Transverse colon (tissue), 4 donors: ENCODE measurements at regions of chr5 and their contacts with region 1.

Region 1: DNA sequence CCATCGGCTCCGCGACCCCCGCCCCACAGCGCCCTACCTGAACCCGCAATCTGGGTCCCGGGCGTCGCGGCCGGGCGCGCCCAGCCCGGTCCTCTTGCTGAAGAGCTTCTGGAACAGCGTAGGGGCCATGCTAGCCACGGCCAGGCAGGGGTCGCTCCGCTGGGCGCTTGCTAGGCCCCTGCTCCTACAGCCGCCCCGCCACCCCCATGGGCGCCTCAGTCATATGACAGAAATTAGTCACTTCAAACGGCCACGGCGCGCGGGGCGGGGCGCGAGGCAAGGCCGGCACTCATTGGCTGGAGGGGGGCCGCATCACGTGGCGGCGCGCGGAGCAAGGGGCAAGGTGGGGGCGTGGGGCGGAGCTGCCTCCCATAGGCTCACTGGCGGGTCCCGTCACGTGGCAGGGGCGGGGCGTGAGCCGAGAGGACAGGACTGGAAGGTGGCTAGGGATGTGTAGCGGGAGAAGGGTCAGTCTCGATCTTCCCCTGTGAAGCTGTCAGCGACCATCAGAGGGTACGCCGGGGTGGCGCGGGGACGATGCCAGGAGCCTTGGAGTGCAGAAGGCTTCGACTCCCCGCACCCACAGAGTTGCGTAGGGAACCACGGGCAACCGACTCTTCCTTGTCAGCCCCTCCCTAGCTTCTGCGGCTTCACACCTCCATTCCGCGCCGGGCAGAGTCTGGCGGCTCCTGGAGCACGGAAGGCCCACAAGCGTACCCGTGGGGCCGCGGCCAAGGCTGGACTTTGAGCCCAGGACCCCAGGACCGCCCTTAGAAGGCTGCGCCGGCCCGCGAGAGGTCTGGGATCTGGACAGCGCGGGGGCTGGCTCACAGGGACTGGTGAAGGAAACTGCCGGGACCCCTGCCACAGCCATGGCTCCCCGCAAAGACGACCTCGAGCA is at the start of gene FNIP1:
- DNase-seq: peak; percentile 100
- H3K4me3 ChIP-seq: peak within 1 kb of the TSS; percentile 83 to 96 (median 90)
- H3K27ac ChIP-seq: peak within 1 kb of the TSS; percentile 98 to 99 (median 98)
- H3K4me1 ChIP-seq: peaks cover 15 to 36% (median 19%) of the 10 kb centered on the region in 4 donors
- H3K27me3 ChIP-seq: no peaks in the 10 kb centered on the region
- CTCF ChIP-seq: peak in 1 of 5 experiments; percentile 27
- EP300 ChIP-seq: peak; percentile 54
- POLR2A ChIP-seq: peak; percentile 96
- total RNA-seq, gene FNIP1: 24.3 to 54.9 (median 40.8) TPM

Region 2: DNA sequence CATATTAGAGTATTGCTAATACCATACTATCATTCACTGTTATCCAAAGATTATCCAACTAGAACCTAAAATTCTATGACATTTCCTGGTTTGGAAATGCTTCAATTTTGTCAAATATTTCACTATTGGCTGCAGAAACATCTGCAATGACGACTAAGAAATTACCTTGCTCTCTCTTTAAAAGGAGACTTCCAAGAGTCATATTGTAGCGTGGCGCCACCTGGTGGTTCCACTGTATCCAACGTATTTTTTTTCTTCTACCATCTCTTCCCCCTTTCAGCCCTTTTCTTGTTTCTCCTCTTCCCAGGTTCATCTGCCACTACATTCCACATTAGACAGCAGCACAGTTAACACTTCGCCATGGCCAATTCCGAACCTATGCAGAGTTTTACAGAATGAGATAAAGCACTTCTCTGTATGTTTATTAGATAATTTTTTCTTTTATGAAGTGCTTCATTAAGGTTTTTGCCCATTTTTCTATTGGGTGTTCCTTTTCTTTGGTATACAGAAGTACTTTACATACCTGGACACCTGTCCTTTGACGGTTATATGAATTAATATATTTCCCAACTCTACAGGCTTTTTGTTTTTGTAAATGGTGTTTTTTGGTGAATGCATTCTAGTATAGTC is 379.7 kb before region 1 on chr5:
- in situ Hi-C with region 1: no loop called
- intact Hi-C with region 1: no loop called
- DNase-seq: peak; percentile 87
- H3K4me3 ChIP-seq: no peak overlapping the region
- H3K27ac ChIP-seq: no peak overlapping the region
- H3K4me1 ChIP-seq: peaks cover 0 to 6% (median 0%) of the 10 kb centered on the region in 4 donors
- H3K27me3 ChIP-seq: no peaks in the 10 kb centered on the region
- CTCF ChIP-seq: peak; percentile 83 to 88 (median 86)
- EP300 ChIP-seq: no peak
- POLR2A ChIP-seq: no peak

Region 3: DNA sequence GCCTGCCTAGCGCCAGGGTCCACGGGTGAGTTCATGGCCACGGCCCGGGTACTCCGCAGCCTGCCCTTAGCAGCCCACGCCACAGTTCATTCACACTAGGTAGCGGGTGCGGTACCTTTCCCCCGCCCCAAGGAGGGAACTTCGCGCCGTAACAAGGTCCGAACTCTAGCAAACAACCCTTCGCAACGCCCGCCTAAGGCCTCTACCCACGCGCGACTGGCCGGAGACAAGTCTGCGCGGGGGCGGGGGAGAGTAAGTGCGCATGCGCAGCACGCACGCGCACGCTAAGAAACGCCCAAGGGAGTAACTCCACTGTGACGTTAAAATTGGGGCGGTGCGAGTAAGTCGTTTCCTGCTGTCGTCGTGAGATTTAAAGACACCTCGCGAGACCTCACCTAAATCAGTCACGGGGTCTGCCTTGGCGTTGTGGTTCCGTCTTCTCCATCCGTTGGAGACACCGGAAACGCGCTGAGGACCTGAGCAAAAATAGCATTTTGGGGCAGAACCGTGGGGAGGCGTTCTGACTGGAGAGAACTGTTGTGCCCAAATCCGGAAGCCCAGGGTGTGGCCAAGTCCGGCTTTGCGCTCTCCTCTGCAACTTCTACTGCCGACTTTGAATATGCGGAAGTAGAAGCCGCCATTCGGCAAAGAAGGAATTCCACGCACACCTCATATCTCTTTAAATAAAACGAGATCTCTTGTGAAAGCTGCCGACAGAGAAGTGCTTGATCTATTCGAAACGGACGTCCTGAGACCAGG is 161.9 kb before region 1 on chr5 and contains the start of gene RAPGEF6:
- in situ Hi-C with region 1: loop called in 2 of 4 experiments (anchors 10 kb)
- intact Hi-C with region 1: no loop called
- DNase-seq: peak; percentile 98
- H3K4me3 ChIP-seq: peak within 1 kb of the TSS; percentile 55 to 78 (median 74)
- H3K27ac ChIP-seq: peak within 1 kb of the TSS; percentile 93 to 100 (median 98)
- H3K4me1 ChIP-seq: peaks cover 13 to 50% (median 46%) of the 10 kb centered on the region in 4 donors
- H3K27me3 ChIP-seq: no peaks in the 10 kb centered on the region
- CTCF ChIP-seq: peak in 3 of 5 experiments; percentile 4 to 71 (median 45)
- EP300 ChIP-seq: no peak
- POLR2A ChIP-seq: peak; percentile 88
- total RNA-seq, gene RAPGEF6: 21.3 to 40.3 (median 35.9) TPM

Region 4: DNA sequence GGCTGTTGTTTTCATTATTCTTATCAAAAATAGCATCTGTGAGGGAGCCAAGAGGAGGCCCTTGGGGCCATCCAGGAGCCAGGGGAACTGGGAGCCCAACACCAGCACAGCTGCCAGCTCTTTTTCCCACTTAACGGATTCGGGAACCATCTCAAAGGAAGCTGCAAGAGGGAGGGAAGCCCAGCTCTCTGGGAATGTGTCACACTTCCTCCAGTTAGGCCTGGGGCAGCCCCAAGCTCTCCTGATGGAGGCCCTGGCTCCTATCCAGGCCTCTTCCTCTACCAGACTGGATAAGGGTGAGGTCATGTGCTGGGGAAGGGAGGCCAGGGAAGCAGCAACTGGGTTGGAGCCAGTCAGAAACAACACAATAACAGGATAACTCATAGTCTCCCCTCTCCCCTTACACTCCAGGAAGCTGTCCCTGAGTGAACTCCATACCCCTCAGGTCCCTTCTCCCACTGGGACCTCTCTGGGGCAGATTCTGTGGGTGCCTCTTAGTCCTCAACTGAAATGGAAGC is 289.3 kb after region 1 on chr5:
- in situ Hi-C with region 1: no loop called
- intact Hi-C with region 1: no loop called
- DNase-seq: no peak
- H3K4me3 ChIP-seq: no peak overlapping the region
- H3K27ac ChIP-seq: no peak overlapping the region
- H3K4me1 ChIP-seq: no peaks in the 10 kb centered on the region
- H3K27me3 ChIP-seq: no peaks in the 10 kb centered on the region
- CTCF ChIP-seq: no peak
- EP300 ChIP-seq: no peak
- POLR2A ChIP-seq: no peak